ENCODE measurements at regions of chr4 and their contacts with region 1.

Region 1: DNA sequence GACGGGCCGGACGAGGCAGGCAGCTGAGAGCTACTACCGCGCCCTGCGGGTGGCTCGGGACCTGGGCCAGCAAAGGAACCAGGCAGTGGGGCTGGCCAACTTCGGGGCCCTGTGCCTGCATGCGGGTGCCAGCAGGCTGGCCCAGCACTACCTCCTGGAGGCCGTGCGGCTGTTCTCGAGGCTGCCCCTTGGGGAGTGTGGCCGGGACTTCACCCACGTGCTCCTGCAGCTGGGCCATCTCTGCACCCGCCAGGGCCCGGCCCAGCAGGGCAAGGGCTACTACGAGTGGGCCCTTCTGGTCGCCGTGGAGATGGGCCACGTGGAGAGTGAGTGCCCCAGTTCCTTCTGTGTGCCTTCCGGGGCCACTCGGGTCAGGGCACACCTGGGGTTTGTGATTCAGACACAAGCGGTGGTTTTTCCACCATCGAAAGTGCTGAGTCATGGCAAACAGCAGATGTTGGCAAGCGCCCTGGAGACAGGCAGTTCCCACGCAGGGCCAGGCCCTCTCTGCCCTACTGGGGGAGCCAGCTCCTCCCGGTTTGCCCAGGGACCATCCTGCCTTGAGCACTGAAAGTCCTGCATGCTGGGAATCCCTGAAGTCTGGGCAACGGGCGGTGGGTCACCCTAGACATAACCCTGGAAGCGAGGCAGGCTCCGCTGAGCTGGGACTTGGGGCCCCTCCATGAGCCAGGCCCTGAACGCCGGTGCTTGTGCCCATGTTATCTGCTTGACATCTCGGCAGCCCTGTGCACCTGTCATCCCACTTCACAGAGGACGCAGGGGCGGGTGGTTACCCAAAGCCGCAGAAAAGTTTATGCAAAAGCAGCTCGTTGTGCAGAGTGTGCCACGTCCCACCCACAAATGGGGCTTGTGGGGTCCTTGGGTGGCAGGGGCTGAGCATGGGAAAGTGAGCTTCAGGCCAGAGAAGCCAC is 29.5 kb downstream of the SH3TC1 start:
- DNase-seq: peak; percentile 70
- ATAC-seq: peak; percentile 74
- H3K4me3 Mint-ChIP-seq: peak overlapping the region; percentile 67
- H3K27ac Mint-ChIP-seq: peak overlapping the region; percentile 89
- H3K4me1 Mint-ChIP-seq: peaks cover 45% of the 10 kb centered on the region
- H3K27me3 Mint-ChIP-seq: no peaks in the 10 kb centered on the region
- CTCF ChIP-seq: no peak

Region 2: GRCh38 chr4:6783053-6783981 is 1445.3 kb before region 1 on chr4:
- CTCF ChIA-PET with region 1: no interaction called
- POLR2A ChIA-PET with region 1: no interaction called
- intact Hi-C with region 1: no loop called
- DNase-seq: peak; percentile 88
- ATAC-seq: peak; percentile 67
- H3K4me3 Mint-ChIP-seq: peak overlapping the region; percentile 84
- H3K27ac Mint-ChIP-seq: peak overlapping the region; percentile 78
- H3K4me1 Mint-ChIP-seq: peaks cover 22% of the 10 kb centered on the region
- H3K27me3 Mint-ChIP-seq: no peaks in the 10 kb centered on the region
- CTCF ChIP-seq: no peak

Region 3: DNA sequence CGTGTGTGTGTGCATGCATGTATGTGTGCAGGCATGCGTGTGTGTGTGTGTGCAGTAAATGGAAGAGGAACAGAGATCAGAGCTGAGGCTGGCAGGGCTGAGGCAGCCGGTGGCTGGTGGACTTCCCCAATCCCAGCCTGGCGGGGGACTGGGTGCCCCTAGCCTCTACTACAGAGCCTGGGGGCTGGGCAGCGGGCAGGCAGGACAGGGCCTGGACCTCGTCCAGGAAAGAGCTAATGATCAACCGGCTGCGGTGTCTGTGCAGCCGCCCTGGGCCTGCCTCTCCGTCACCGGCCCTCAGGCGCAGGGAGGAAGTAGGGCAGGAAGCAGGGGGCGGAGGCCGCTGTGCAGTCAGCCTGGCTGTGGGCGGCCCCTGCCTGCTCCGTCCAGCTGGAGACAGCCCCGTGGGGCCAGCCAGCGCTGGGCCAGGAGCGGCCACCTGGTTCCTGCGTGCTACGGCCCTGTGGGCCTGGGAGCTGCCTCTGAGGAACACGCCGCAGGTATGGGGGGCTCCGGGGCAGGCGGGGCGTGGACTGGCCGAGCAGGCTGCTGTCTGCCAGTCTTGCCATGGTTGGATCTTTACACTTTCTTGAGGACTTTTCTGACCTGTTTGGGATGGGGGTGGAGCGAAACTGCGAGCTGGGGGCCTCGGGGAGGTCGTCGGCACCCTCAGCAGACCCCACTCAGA is 29.5 kb before region 1 on chr4 and contains the start of gene SH3TC1:
- CTCF ChIA-PET with region 1: interaction called, 5 read pairs
- POLR2A ChIA-PET with region 1: interaction called, 123 read pairs
- intact Hi-C with region 1: loop called (anchors 1 kb)
- DNase-seq: peak; percentile 78
- ATAC-seq: peak; percentile 67
- H3K4me3 Mint-ChIP-seq: peak within 1 kb of the TSS; percentile 97
- H3K27ac Mint-ChIP-seq: peak within 1 kb of the TSS; percentile 96
- H3K4me1 Mint-ChIP-seq: peaks cover 63% of the 10 kb centered on the region
- H3K27me3 Mint-ChIP-seq: no peaks in the 10 kb centered on the region
- CTCF ChIP-seq: no peak
- total RNA-seq, gene SH3TC1: 104 and 135 TPM in 2 replicates

Region 4: GRCh38 chr4:8241895-8242696 is 13.5 kb after region 1 on chr4:
- CTCF ChIA-PET with region 1: interaction called, 8 read pairs
- POLR2A ChIA-PET with region 1: interaction called, 11 read pairs
- intact Hi-C with region 1: loop called (anchors 1 kb)
- DNase-seq: peak; percentile 85
- ATAC-seq: peak; percentile 74
- H3K4me3 Mint-ChIP-seq: no peak overlapping the region
- H3K27ac Mint-ChIP-seq: no peak overlapping the region
- H3K4me1 Mint-ChIP-seq: peaks cover 21% of the 10 kb centered on the region
- H3K27me3 Mint-ChIP-seq: no peaks in the 10 kb centered on the region
- CTCF ChIP-seq: peak; percentile 83

Region 5: DNA sequence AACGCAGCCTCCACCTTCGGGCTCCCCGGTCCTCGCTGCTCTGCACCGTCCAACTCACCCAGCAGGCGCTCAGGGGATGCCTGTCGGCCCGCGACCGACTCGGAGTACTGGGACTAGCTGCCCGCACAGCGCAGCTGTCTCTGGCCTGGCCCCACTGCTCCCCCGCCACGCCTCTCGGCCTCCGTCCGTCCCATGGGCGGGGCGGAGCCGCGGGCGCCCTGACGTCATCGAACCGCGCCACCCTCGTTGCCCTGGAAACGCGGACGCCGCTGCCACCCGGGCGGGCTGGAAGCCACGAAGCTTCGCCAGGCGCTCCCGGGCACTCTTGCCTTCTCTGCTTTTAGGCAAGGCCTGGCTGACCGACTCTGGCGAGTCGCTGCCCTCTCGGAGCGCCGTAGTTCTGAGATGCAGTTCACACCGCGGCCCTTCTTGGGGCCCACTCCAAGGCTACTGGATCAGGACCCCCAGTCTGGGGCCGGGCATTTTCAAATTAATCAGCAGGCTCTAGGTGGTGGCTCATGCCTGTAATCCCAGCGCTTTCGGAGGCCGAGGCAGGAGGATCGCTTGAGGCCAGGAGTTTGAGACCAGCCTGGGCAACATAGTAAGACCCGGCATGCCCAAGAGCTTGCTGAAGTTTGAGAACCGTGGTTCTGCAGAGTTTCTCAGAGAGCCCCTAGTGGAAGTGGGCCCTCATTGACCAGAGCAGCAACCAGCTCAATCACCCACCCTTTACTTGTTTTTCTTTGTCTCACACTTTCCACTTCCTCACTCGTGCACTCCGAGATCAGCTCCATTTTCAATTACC is 199.9 kb after region 1 on chr4:
- CTCF ChIA-PET with region 1: no interaction called
- POLR2A ChIA-PET with region 1: no interaction called
- intact Hi-C with region 1: loop called (anchors 2 kb)
- DNase-seq: peak; percentile 98
- ATAC-seq: peak; percentile 95
- H3K4me3 Mint-ChIP-seq: peak overlapping the region; percentile 95
- H3K27ac Mint-ChIP-seq: peak overlapping the region; percentile 93
- H3K4me1 Mint-ChIP-seq: peaks cover 32% of the 10 kb centered on the region
- H3K27me3 Mint-ChIP-seq: no peaks in the 10 kb centered on the region
- CTCF ChIP-seq: no peak

Region 6: GRCh38 chr4:8440492-8441341 is 212.1 kb after region 1 on chr4 and contains the starts of genes ACOX3 and TRMT44:
- CTCF ChIA-PET with region 1: no interaction called
- POLR2A ChIA-PET with region 1: interaction called, 5 read pairs
- intact Hi-C with region 1: loop called (anchors 2 kb)
- DNase-seq: peak; percentile 100
- ATAC-seq: peak; percentile 85
- H3K4me3 Mint-ChIP-seq: peak within 1 kb of the TSS; percentile 97
- H3K27ac Mint-ChIP-seq: peak within 1 kb of the TSS; percentile 98
- H3K4me1 Mint-ChIP-seq: peaks cover 60% of the 10 kb centered on the region
- H3K27me3 Mint-ChIP-seq: no peaks in the 10 kb centered on the region
- CTCF ChIP-seq: no peak
- total RNA-seq, gene ACOX3: 17.1 and 20.6 TPM in 2 replicates
- total RNA-seq, gene TRMT44: 29.3 and 33.8 TPM in 2 replicates